Vagina (tissue), 2 donors: ENCODE measurements at regions of chr6 and their contacts with region 1.

Region 1: DNA sequence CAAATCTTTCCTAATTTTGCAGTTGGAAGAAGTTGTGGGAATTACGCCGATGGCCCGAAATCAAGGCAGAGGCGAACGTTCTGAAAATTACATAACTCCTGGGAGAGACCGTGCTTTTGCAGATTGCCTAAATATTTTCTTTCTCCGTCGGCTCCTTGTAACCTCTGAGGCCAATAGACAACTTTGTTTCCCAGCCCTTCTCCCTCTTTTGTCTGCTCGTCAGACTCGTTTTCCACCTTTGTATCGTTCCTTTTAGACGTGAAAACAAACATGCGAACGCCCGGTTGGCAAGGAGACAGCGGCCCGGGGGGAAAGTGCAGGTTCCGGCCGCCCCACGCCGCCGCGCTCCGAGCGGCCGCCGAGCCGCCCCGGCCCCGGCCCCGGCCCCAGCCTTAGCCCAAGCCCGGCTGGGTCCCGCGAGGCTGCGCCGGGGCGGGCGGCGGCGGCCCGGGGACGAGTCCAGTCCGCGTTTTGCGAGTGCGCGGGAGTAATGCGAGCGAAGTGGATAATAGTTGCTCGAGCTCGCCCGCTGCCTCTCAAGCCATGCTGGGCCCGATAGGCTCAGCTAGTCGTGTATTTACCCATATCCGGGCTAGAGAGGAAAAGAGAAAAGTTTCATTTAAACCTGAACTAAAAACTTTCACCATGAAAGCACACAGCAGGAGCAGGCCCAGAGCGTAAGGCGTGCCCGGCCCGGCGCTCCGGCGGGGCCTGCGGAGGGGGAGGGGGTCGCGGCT is at the start of gene ARID1B:
- DNase-seq: no peak
- H3K4me3 ChIP-seq: peak within 1 kb of the TSS; percentile 91 to 92
- H3K27ac ChIP-seq: peak within 1 kb of the TSS; percentile 99
- H3K4me1 ChIP-seq: peaks cover 38% of the 10 kb centered on the region
- H3K27me3 ChIP-seq: no peaks in the 10 kb centered on the region
- CTCF ChIP-seq: no peak
- POLR2A ChIP-seq: peak in 1 of 2 donors; percentile 32
- total RNA-seq, gene ARID1B: 141 TPM

Region 2: DNA sequence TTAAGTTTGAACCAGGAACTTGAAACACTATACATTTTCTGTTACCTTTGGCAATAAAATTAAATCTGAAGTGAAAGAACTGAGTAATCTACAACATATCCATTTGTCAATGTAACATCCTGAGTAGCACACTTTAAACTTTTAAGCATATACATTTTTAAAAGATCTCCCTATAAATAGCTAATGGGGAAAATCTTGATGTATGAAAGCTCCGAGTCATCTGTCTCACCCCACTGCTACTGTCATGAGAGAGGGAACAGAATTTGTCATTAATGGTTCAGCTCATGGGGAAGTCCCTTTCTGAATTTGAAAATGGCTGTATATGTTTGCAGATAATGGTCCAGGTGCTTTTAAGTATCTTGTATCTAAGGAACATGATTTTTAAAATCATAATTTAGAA is 1266.1 kb before region 1 on chr6:
- intact Hi-C with region 1: no loop called
- DNase-seq: no peak
- H3K4me3 ChIP-seq: no peak overlapping the region
- H3K27ac ChIP-seq: no peak overlapping the region
- H3K4me1 ChIP-seq: no peaks in the 10 kb centered on the region
- H3K27me3 ChIP-seq: no peaks in the 10 kb centered on the region
- CTCF ChIP-seq: no peak
- POLR2A ChIP-seq: no peak

Region 3: DNA sequence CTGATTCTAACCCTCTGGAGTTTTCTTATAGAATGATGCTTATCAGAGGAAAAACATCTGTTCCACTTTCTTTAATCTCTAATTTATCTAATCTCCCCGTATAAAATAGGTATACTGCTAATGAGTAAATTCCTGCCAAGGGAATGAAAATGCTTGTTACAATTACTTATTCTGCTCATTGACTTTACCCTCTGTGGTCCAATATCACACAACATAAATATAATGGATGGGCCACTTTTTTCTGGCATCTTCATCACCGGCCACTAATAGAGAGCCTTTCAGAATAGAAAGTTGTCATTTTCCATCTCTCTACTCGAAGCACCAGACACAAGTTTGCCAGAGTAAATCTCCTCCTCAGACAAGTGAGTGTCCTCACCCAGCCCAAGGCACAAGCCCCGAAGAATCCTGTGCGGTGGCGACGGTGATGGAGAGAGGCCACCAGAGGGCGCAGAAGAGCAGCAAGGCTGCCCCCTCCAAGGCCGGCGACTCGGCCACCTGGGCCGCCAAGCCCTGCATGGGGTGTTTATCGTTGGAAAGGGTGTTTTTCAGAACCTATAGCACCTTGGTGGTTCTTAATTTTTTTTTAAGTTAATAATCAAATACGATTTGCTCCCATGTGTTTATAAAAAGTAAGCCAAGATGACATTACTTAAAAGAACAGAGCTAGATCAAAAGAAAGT is 212.7 kb before region 1 on chr6:
- intact Hi-C with region 1: loop called (anchors 10 kb)
- DNase-seq: no peak
- H3K4me3 ChIP-seq: no peak overlapping the region
- H3K27ac ChIP-seq: no peak overlapping the region
- H3K4me1 ChIP-seq: no peaks in the 10 kb centered on the region
- H3K27me3 ChIP-seq: no peaks in the 10 kb centered on the region
- CTCF ChIP-seq: peak; percentile 89 to 90 (median 89)
- POLR2A ChIP-seq: no peak

Region 4: GRCh38 chr6:156686995-156687788 is 89.8 kb before region 1 on chr6:
- intact Hi-C with region 1: loop called (anchors 2 kb)
- DNase-seq: peak in 1 of 2 donors; percentile 95
- H3K4me3 ChIP-seq: peak overlapping the region; percentile 70 to 77
- H3K27ac ChIP-seq: peak overlapping the region; percentile 97
- H3K4me1 ChIP-seq: peaks cover 10% of the 10 kb centered on the region
- H3K27me3 ChIP-seq: no peaks in the 10 kb centered on the region
- CTCF ChIP-seq: peak in 1 of 3 experiments; percentile 17
- POLR2A ChIP-seq: peak in 1 of 2 donors; percentile 74

Region 5: GRCh38 chr6:156719720-156720563 is 57.1 kb before region 1 on chr6:
- intact Hi-C with region 1: loop called (anchors 2 kb)
- DNase-seq: peak in 1 of 2 donors; percentile 94
- H3K4me3 ChIP-seq: peak overlapping the region; percentile 31 to 39
- H3K27ac ChIP-seq: peak overlapping the region; percentile 98
- H3K4me1 ChIP-seq: peaks cover 31% of the 10 kb centered on the region
- H3K27me3 ChIP-seq: no peaks in the 10 kb centered on the region
- CTCF ChIP-seq: no peak
- POLR2A ChIP-seq: peak in 1 of 2 donors; percentile 7

Region 6: DNA sequence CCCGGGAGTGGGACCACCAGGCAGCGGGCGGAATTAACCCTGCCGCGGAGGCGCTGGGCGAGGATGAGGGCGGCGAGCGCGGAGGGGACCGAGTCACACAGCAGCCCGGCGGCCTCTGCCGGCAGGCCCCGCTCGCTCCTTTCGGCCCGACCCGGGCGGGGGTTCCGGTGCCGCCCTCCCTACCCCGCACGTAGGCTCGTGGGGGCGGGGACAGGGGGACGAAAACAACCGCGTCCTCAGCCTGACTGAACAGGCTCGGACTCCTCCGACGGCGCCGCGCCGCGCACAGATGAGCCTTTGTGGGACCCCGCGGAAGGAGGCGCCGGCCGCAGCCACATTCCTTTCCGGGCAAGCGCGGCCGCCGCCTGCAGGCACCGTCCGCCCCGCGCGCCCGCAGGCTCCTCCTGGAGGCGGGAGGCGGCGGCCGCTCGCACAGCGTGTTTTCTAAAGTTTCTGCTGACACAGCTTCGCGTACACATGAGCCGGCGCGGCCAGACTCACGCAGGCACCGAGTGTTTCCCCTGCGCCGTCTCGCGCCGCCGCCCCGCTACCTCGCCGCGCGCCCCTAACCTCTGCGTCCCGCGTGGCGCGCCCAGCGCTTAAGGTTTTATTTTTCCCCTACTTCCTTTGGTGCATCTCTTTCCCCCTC is 244.5 kb after region 1 on chr6:
- intact Hi-C with region 1: loop called (anchors 2 kb)
- DNase-seq: peak in 1 of 2 donors; percentile 95
- H3K4me3 ChIP-seq: peak overlapping the region; percentile 78 to 90
- H3K27ac ChIP-seq: peak overlapping the region; percentile 98
- H3K4me1 ChIP-seq: peaks cover 55% of the 10 kb centered on the region
- H3K27me3 ChIP-seq: no peaks in the 10 kb centered on the region
- CTCF ChIP-seq: peak in 1 of 3 experiments; percentile 20
- POLR2A ChIP-seq: peak; percentile 59 to 93